ENCODE measurements at regions of chr5 and their contacts with region 1.

Region 1: GRCh38 chr5:40834849-40835787 is at the start of gene RPL37:
- DNase-seq: peak; percentile 99
- H3K4me3 ChIP-seq: peak within 1 kb of the TSS; percentile 63
- H3K27ac ChIP-seq: peak within 1 kb of the TSS; percentile 86
- H3K4me1 ChIP-seq: peaks cover 24% of the 10 kb centered on the region
- H3K27me3 ChIP-seq: no peaks in the 10 kb centered on the region
- CTCF ChIP-seq: no peak
- total RNA-seq, gene RPL37: 1,502 and 1,533 TPM in 2 replicates

Region 2: GRCh38 chr5:40755407-40756365 is 79.4 kb before region 1 on chr5 and contains the start of gene TTC33:
- CTCF ChIA-PET with region 1: no interaction called
- POLR2A ChIA-PET with region 1: no interaction called
- intact Hi-C with region 1: loop called (anchors 5 kb)
- DNase-seq: peak; percentile 97
- H3K4me3 ChIP-seq: peak within 1 kb of the TSS; percentile 93
- H3K27ac ChIP-seq: peak within 1 kb of the TSS; percentile 90
- H3K4me1 ChIP-seq: peaks cover 10% of the 10 kb centered on the region
- H3K27me3 ChIP-seq: no peaks in the 10 kb centered on the region
- CTCF ChIP-seq: peak; percentile 87
- total RNA-seq, gene TTC33: 17.0 and 19.1 TPM in 2 replicates

Region 3: GRCh38 chr5:41754857-41755256 is 919.7 kb after region 1 on chr5:
- CTCF ChIA-PET with region 1: no interaction called
- POLR2A ChIA-PET with region 1: no interaction called
- intact Hi-C with region 1: no loop called
- DNase-seq: no peak
- H3K4me3 ChIP-seq: no peak overlapping the region
- H3K27ac ChIP-seq: no peak overlapping the region
- H3K4me1 ChIP-seq: no peaks in the 10 kb centered on the region
- H3K27me3 ChIP-seq: no peaks in the 10 kb centered on the region
- CTCF ChIP-seq: no peak; the same call in 1 of the 2 replicates